ENCODE measurements at regions of chr6 and their contacts with region 1.

Region 1: DNA sequence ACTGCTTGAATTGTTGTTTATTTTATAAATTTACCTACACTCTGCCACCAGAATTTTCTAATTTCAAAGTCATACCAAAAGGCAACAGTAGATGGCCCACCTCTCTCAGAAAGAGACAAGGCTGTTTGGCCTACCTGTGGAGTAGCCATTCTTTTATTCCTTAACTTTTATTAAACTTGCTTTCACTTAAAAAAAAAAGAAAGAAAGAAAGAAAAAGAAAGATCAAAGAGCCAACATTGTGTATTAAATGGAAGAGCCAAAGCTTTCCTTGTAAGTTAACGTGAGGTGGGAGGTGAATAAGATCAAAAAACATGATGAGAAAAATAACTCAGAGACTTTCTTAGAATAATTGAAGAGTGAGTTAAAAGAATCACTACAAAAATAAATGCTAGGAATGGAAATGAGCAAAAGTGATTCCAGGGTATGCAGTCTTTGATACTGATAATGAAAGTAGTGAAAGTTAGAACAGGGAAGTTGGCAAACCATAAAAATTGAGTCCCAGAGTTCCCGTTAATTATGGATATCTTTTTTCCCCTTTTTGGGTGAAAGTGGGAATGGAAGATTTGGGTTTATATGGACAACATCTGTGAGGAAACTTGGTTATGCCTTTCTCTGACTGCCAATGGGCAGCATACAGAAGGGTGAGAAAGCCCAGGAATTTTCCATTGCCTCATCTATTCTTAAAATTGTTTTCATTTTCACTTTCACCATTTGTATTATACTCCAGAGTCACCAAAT is 35.9 kb upstream of the MYB start:
- DNase-seq: peak; percentile 12
- ATAC-seq: peak; percentile 72
- H3K4me3 ChIP-seq: no peak overlapping the region
- H3K27ac ChIP-seq: no peak overlapping the region
- H3K4me1 ChIP-seq: peaks cover 0 to 6% of the 10 kb centered on the region in 2 experiments; a peak in 1 of 4 replicates
- H3K27me3 ChIP-seq: no peaks in the 10 kb centered on the region
- CTCF ChIP-seq: peak; percentile 49 to 82 (median 72); a peak in 5 of 6 replicates
- POLR2A ChIP-seq: no peak
- RAD21 ChIP-seq: peak; percentile 86

Region 2: GRCh38 chr6:135183532-135184440 is 38.6 kb after region 1 on chr6:
- CTCF ChIA-PET with region 1: interaction called, 21 read pairs
- POLR2A ChIA-PET with region 1: interaction called, 3 read pairs
- RAD21 ChIA-PET with region 1: interaction called in 1 of 2 experiments, 3 read pairs
- intact Hi-C with region 1: loop called (anchors 1 kb)
- DNase-seq: peak; percentile 83
- ATAC-seq: peak; percentile 71
- H3K4me3 ChIP-seq: peak overlapping the region; percentile 55 to 64
- H3K27ac ChIP-seq: no peak overlapping the region
- H3K4me1 ChIP-seq: peaks cover 2 to 39% of the 10 kb centered on the region in 2 experiments; a peak in 3 of 4 replicates
- H3K27me3 ChIP-seq: no peaks in the 10 kb centered on the region
- CTCF ChIP-seq: peak; percentile 72 to 84 (median 78)
- POLR2A ChIP-seq: no peak
- RAD21 ChIP-seq: peak; percentile 81

Region 3: GRCh38 chr6:135423649-135424128 is 278.5 kb after region 1 on chr6:
- CTCF ChIA-PET with region 1: interaction called, 6 read pairs
- POLR2A ChIA-PET with region 1: no interaction called
- RAD21 ChIA-PET with region 1: no interaction called
- intact Hi-C with region 1: loop called (anchors 1 kb)
- DNase-seq: peak; percentile 22
- ATAC-seq: peak; percentile 87
- H3K4me3 ChIP-seq: no peak overlapping the region
- H3K27ac ChIP-seq: no peak overlapping the region
- H3K4me1 ChIP-seq: no peaks in the 10 kb centered on the region
- H3K27me3 ChIP-seq: no peaks in the 10 kb centered on the region
- CTCF ChIP-seq: peak; percentile 40 to 72 (median 55); a peak in 5 of 6 replicates
- POLR2A ChIP-seq: no peak
- RAD21 ChIP-seq: peak; percentile 68

Measured in HCT116 (cell line).